IMR-90 (cell line): ENCODE measurements at regions of chr5 and their contacts with region 1.

Region 1: GRCh38 chr5:137894586-137894985 is 5.3 kb downstream of the PKD2L2 start:
- DNase-seq: no peak
- ATAC-seq: no peak
- H3K4me3 ChIP-seq: no peak overlapping the region
- H3K27ac ChIP-seq: no peak overlapping the region
- H3K4me1 ChIP-seq: no peaks in the 10 kb centered on the region
- H3K27me3 ChIP-seq: no peaks in the 10 kb centered on the region; the same call in 1 of the 2 replicates
- CTCF ChIP-seq: no peak
- POLR2A ChIP-seq: no peak
- RAD21 ChIP-seq: no peak

Region 2: GRCh38 chr5:137847687-137848086 is 46.9 kb before region 1 on chr5:
- CTCF ChIA-PET with region 1: no interaction called
- POLR2A ChIA-PET with region 1: no interaction called
- dilution Hi-C with region 1: no loop called
- in situ Hi-C with region 1: no loop called
- intact Hi-C with region 1: no loop called
- DNase-seq: no peak
- ATAC-seq: no peak
- H3K4me3 ChIP-seq: no peak overlapping the region
- H3K27ac ChIP-seq: no peak overlapping the region
- H3K4me1 ChIP-seq: no peaks in the 10 kb centered on the region
- H3K27me3 ChIP-seq: no peaks in the 10 kb centered on the region; the same call in 1 of the 2 replicates
- CTCF ChIP-seq: no peak
- POLR2A ChIP-seq: no peak
- RAD21 ChIP-seq: no peak

Region 3: DNA sequence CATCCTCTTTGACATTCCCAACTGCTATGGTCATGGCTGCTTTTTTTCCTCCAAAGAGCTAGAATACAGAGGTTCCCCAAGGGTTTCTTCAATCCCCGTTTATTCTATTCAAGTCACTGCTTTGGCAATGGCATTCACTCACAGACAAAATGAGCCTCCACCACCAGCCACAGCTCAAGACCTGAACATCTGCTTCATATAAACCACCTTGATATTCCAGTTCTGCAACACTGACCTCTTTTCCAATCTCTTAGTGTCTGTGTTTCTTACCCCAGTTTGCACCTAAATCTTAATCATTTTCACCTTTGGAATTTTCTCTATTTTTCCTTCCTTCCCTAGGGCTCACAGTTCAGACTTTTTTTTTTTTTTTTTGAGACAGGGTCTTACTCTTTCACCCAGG is 84.1 kb after region 1 on chr5:
- CTCF ChIA-PET with region 1: no interaction called
- POLR2A ChIA-PET with region 1: interaction called, 11 read pairs
- dilution Hi-C with region 1: no loop called
- in situ Hi-C with region 1: no loop called
- intact Hi-C with region 1: no loop called
- DNase-seq: no peak
- ATAC-seq: no peak
- H3K4me3 ChIP-seq: no peak overlapping the region
- H3K27ac ChIP-seq: no peak overlapping the region
- H3K4me1 ChIP-seq: no peaks in the 10 kb centered on the region
- H3K27me3 ChIP-seq: no peaks in the 10 kb centered on the region
- CTCF ChIP-seq: no peak
- POLR2A ChIP-seq: no peak
- RAD21 ChIP-seq: no peak